ENCODE measurements at regions of chr1 and their contacts with region 1.

Region 1: DNA sequence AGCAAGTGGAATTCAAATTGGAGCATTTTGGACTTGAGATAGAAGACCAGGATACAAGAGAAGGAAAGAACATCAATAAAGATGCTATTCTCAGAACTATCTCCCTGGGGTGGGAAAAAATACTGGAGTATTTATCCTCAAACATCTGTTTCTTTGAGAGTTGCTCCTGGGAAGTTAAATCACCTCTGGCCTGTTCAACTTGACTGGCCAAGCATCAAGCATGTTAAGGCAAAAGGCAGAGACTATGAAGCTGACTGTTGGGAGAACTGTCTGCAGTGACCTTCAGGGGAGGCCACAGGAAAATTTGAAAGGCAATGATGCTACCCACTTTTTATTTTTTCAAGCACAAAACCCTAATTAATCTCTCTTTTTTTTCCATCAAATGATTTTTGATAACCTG is 239.0 kb downstream of the NTNG1 start:
- DNase-seq: no peak
- ATAC-seq: no peak
- H3K4me3 ChIP-seq: no peak overlapping the region
- H3K27ac ChIP-seq: no peak overlapping the region
- H3K4me1 ChIP-seq: no peaks in the 10 kb centered on the region
- H3K27me3 ChIP-seq: no peaks in the 10 kb centered on the region
- CTCF ChIP-seq: no peak
- POLR2A ChIP-seq: no peak
- RAD21 ChIP-seq: no peak

Region 2: DNA sequence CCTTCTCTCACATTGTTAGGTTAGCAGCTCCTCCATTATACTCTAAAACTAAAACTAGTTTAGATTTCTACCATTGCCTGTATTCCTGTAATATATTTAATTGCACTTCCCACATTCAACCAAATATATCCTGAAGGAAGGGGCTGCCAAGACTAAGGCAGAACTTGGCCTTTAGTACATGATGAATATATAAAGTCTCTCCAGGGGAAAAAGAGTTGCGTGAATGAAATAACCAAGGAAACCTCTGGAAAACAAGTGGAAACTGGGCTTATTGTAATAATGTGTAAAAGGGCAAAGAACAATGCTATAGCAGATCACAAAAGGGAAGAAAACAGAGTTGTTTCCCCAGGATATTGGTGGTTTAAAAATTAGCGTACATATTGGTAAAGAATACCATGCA is 1335.9 kb before region 1 on chr1:
- CTCF ChIA-PET with region 1: no interaction called
- POLR2A ChIA-PET with region 1: no interaction called
- RAD21 ChIA-PET with region 1: no interaction called
- intact Hi-C with region 1: loop called (anchors 5 kb)
- DNase-seq: no peak
- ATAC-seq: no peak
- H3K4me3 ChIP-seq: no peak overlapping the region
- H3K27ac ChIP-seq: no peak overlapping the region
- H3K4me1 ChIP-seq: no peaks in the 10 kb centered on the region
- H3K27me3 ChIP-seq: no peaks in the 10 kb centered on the region
- CTCF ChIP-seq: no peak
- POLR2A ChIP-seq: no peak
- RAD21 ChIP-seq: no peak

Measured in HCT116 (cell line).